ENCODE measurements at regions of chr2 and their contacts with region 1.

Region 1: GRCh38 chr2:175690113-175690837 is 311.8 kb downstream of the LNPK start:
- DNase-seq: peak; percentile 51
- H3K4me3 Mint-ChIP-seq: no peak overlapping the region
- H3K27ac Mint-ChIP-seq: no peak overlapping the region
- H3K4me1 Mint-ChIP-seq: no peaks in the 10 kb centered on the region
- H3K27me3 Mint-ChIP-seq: peaks cover 39% of the 10 kb centered on the region
- CTCF ChIP-seq: peak; percentile 76

Region 2: DNA sequence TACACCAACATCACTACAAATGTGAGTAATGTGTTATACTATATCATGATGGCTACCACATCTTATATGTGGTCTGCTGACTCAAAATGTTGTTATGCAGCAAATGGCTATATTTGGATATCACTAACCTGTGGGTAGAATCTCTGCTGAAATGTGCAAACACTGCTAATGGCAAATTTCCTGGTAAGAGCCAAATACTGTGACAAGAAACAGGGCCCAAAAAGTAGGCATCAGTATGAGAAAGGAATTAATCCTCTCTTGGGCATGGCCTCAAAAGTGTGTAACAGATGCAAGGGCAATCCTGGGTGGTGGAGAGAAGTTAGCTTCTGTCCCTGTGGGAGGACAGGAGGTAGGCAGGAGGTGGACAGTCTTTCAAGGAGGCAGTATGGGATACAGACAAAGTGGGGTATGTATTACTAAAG is 535.6 kb before region 1 on chr2:
- CTCF ChIA-PET with region 1: no interaction called
- intact Hi-C with region 1: no loop called
- DNase-seq: no peak
- H3K4me3 Mint-ChIP-seq: no peak overlapping the region
- H3K27ac Mint-ChIP-seq: peak overlapping the region; percentile 48
- H3K4me1 Mint-ChIP-seq: peaks cover 27% of the 10 kb centered on the region
- H3K27me3 Mint-ChIP-seq: no peaks in the 10 kb centered on the region
- CTCF ChIP-seq: no peak

Region 3: DNA sequence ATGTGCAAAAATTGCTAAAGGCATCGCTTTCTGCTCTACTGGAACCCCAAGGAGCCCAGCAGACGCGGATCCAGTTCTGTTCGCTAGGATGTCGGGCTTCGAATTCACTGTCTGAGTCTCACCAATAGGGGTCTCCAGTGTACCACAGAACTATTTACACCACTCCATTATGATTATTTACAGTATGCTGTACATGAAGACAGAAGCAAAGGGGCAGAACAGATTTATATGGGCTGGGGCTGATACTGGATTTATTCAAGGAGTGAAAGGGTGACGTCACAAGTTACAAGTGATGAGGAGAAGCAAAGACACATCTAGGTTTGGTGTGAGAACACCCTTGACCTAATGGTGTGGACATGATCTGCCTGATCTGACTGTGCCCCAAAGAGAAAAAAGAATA is 323.5 kb before region 1 on chr2:
- CTCF ChIA-PET with region 1: interaction called, 4 read pairs
- intact Hi-C with region 1: loop called (anchors 5 kb)
- DNase-seq: peak; percentile 62
- H3K4me3 Mint-ChIP-seq: no peak overlapping the region
- H3K27ac Mint-ChIP-seq: no peak overlapping the region
- H3K4me1 Mint-ChIP-seq: peaks cover 9% of the 10 kb centered on the region
- H3K27me3 Mint-ChIP-seq: no peaks in the 10 kb centered on the region
- CTCF ChIP-seq: peak; percentile 82